ENCODE measurements at regions of chr2 and their contacts with region 1.

Region 1: DNA sequence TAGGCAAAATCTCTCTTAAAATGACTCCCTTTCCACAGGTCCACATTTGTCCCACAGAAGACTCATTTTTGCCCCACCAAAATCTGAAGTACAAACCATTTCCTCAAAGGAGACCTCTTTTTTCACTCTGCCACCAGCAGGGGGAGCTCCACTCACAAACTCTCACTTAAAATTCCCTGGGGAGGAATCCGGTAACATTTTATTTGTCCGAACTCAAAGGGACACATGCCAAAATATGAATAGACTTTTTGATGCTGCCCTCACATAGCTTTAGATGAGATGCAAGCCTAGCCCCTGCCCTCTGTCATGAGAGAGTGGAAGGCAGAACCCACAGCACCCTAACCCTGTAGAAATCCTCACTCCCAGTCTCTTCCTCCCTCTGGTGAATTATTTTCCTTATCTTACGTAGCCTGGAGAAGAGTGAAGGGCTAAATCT is 57.1 kb downstream of the RMDN2 start:
- DNase-seq: peak; percentile 68
- ATAC-seq: no peak
- H3K4me3 Mint-ChIP-seq: no peak overlapping the region
- H3K27ac Mint-ChIP-seq: no peak overlapping the region
- H3K4me1 Mint-ChIP-seq: peaks cover 6% of the 10 kb centered on the region
- H3K27me3 Mint-ChIP-seq: no peaks in the 10 kb centered on the region
- CTCF ChIP-seq: peak; percentile 95

Region 2: GRCh38 chr2:37993143-37993542 is 11.0 kb after region 1 on chr2:
- CTCF ChIA-PET with region 1: interaction called, 14 read pairs
- POLR2A ChIA-PET with region 1: no interaction called
- intact Hi-C with region 1: no loop called
- DNase-seq: no peak
- ATAC-seq: no peak
- H3K4me3 Mint-ChIP-seq: no peak overlapping the region
- H3K27ac Mint-ChIP-seq: no peak overlapping the region
- H3K4me1 Mint-ChIP-seq: no peaks in the 10 kb centered on the region
- H3K27me3 Mint-ChIP-seq: no peaks in the 10 kb centered on the region
- CTCF ChIP-seq: no peak

Region 3: DNA sequence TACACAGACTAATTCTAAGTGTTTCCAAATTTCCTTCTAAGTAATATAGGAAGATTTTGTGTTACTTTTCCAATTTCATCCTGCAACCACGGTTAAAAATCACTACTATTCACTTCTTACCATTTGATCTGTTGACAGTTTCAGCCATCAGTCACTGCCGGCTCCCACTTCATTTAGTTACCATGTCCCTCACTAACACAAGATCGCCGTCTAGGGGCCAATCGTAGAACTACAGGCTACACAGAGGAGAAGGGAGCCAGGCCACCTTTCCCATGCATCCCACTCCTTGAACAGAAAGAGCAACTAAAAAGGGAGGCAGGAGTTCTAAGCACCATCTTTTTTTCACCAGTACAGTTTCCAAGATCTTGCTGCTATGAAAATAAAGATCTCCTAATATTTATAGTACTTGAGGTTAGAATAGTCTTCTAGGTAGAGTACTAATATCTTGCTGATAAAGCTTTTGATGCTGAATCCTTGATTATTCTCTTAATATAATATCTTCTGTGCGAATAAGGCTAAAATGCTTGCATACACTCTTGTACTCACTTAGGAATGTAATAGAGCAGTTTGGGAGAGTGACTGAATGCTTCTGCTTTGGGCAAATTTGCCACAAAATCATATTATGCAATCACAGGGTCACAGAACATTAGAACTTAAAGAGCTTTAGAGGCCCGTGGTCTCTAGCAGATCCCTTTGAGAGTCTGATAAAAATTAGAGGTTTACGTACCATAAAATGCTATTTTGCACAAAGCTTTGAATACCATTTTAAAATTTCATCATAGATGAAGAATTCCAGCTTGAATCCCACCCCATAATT is 133.3 kb after region 1 on chr2:
- CTCF ChIA-PET with region 1: interaction called, 8 read pairs
- POLR2A ChIA-PET with region 1: no interaction called
- intact Hi-C with region 1: loop called (anchors 5 kb)
- DNase-seq: peak; percentile 89
- ATAC-seq: peak; percentile 86
- H3K4me3 Mint-ChIP-seq: no peak overlapping the region
- H3K27ac Mint-ChIP-seq: no peak overlapping the region
- H3K4me1 Mint-ChIP-seq: no peaks in the 10 kb centered on the region
- H3K27me3 Mint-ChIP-seq: peaks cover 31% of the 10 kb centered on the region
- CTCF ChIP-seq: peak; percentile 95

Region 4: GRCh38 chr2:38274286-38275276 is 292.4 kb after region 1 on chr2:
- CTCF ChIA-PET with region 1: interaction called, 7 read pairs
- POLR2A ChIA-PET with region 1: no interaction called
- intact Hi-C with region 1: loop called (anchors 1 kb)
- DNase-seq: peak; percentile 47
- ATAC-seq: peak; percentile 72
- H3K4me3 Mint-ChIP-seq: no peak overlapping the region
- H3K27ac Mint-ChIP-seq: no peak overlapping the region
- H3K4me1 Mint-ChIP-seq: no peaks in the 10 kb centered on the region
- H3K27me3 Mint-ChIP-seq: no peaks in the 10 kb centered on the region
- CTCF ChIP-seq: peak; percentile 56

Measured in activated CD8-positive, alpha-beta T cell treated with anti-CD3 and anti-CD28 coated beads for 36 hours (primary cell).